OCI-LY7 (cell line): ENCODE measurements at regions of chr19 and their contacts with region 1.

Region 1: DNA sequence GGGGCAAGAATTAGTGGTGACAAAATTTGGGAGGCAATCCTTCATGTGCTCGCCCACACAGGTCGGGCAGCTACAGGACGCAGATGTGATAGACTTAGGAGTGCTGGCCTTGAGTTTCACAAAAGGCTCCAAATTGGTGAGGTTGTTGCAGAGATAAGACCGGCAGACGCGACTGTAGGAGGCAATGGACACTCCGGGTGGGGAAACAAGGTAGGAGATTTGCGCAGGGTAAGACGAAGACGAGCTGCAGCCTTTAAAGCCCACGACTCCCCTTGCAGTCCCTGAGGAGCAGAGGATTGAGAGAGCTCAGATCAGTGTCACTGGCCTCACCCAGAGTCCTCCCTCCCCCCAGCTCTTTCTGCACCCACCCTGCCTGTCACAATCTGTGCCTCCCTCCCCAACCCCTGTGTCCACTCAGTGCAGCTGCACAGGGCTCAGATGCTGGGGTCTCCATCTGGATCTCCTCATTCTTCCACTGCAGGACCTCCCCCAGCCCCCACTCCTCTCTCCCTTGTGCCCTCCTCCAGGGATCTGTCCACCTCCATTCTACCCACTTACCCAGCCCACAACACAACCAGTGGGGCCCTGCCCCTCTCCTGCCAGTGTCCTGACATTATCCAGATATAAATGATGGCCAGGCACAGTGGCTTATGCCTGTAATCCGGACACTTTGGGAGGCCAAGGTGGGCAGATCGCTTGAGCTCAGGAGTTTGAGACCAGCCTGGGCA is 6.3 kb downstream of the LYPD4 start:
- DNase-seq: no peak
- H3K4me3 ChIP-seq: no peak overlapping the region
- H3K27ac ChIP-seq: no peak overlapping the region
- H3K4me1 ChIP-seq: peaks cover 14% of the 10 kb centered on the region
- CTCF ChIP-seq: no peak

Region 2: DNA sequence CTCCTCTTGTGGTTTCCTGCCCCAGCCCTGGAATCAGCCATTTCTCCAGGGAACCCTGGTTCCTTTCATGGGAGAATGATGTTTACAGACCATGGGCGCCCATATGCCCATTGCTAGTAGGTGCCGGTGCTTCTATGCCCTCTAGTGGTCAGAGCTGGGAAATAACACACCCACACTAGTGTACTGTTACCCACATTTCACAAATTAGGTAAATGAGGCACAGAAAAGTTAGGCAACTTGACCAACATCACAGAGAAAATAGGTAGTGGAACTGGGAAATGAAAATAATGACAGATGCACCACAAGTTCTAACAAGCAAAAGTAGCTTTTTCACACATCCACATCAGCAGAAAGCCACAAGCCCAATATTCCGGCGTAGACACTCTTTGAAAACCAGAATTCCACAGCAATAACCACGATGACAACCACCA is 43.1 kb before region 1 on chr19:
- CTCF ChIA-PET with region 1: interaction called, 4 read pairs
- POLR2A ChIA-PET with region 1: interaction called, 4 read pairs
- intact Hi-C with region 1: loop called (anchors 1 kb)
- DNase-seq: peak; percentile 73
- H3K4me3 ChIP-seq: no peak overlapping the region
- H3K27ac ChIP-seq: no peak overlapping the region
- H3K4me1 ChIP-seq: peaks cover 16% of the 10 kb centered on the region
- CTCF ChIP-seq: peak; percentile 94

Region 3: DNA sequence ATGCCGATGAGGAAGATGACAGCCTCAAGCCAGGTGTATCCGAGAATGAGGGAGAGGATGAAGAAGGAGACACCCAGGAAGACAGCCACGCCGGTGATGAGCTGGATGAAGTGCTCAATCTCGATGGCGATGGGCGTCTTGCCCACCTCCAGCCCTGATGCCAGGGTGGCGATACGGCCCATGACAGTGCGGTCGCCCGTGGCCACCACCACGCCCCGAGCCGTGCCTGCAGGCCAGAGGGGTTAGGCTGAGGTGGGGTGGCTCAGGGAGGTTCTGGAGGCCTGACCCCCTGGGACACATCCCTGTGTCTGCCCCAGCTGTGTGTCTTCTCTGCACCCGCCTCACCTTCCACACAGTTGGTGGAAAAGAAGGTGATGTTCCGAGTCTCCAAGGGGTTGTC is 146.8 kb after region 1 on chr19:
- CTCF ChIA-PET with region 1: no interaction called
- POLR2A ChIA-PET with region 1: interaction called, 10 read pairs
- intact Hi-C with region 1: no loop called
- DNase-seq: no peak
- H3K4me3 ChIP-seq: no peak overlapping the region
- H3K27ac ChIP-seq: no peak overlapping the region
- H3K4me1 ChIP-seq: no peaks in the 10 kb centered on the region
- CTCF ChIP-seq: no peak